ENCODE measurements at regions of chr14 and their contacts with region 1.

Region 1: GRCh38 chr14:96424109-96424989 is 32.4 kb downstream of the AK7 start:
- DNase-seq: no peak
- ATAC-seq: peak; percentile 67

Region 2: DNA sequence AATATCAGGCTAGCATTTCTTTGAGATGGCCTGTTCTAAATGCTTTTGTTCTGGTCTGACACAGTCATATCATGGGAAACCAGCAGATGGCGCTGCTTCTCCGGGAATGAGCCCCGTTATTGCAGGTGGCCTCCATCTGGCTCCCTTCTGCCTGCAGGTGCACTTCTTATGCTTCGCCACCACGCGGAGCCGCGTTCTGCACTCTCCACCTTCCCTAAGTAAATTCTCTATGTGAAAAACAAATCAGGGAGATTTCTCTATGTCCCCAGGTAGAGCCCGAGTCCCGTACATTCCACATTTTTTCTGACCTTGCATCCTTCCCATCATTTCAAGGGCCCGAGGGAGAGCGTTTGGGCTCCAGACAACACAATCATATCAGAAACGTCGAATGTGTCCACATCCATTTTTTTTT is 863.3 kb before region 1 on chr14:
- intact Hi-C with region 1: loop called (anchors 5 kb)
- DNase-seq: peak; percentile 81
- ATAC-seq: peak; percentile 76

Region 3: GRCh38 chr14:96100161-96101029 is 324.0 kb before region 1 on chr14:
- intact Hi-C with region 1: loop called (anchors 2 kb)
- DNase-seq: no peak
- ATAC-seq: no peak

Region 4: DNA sequence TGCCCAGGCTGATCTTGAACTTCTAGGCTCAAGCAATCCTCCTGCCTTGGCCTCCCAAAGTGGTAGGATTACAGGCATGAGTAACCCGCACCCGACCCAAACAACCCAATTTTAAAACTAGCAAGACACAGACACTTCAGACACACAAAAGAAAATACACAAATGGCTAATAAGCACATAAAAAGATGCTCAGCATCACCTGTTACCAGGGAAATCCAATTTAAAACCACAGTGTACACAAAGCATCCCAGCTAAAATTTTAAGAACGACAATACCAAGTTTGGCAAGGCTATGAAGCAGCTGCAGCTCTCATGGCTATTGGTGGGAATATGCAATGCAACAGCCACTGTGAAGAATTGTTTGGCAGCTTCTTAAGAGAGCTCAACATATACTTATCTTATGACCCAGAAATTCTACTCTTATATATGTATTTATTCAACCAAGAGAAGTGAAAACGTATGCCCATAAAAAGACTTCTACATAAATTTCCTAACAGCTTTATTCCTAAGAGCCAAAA is 126.3 kb before region 1 on chr14:
- intact Hi-C with region 1: loop called (anchors 1 kb)
- DNase-seq: no peak
- ATAC-seq: no peak

Region 5: DNA sequence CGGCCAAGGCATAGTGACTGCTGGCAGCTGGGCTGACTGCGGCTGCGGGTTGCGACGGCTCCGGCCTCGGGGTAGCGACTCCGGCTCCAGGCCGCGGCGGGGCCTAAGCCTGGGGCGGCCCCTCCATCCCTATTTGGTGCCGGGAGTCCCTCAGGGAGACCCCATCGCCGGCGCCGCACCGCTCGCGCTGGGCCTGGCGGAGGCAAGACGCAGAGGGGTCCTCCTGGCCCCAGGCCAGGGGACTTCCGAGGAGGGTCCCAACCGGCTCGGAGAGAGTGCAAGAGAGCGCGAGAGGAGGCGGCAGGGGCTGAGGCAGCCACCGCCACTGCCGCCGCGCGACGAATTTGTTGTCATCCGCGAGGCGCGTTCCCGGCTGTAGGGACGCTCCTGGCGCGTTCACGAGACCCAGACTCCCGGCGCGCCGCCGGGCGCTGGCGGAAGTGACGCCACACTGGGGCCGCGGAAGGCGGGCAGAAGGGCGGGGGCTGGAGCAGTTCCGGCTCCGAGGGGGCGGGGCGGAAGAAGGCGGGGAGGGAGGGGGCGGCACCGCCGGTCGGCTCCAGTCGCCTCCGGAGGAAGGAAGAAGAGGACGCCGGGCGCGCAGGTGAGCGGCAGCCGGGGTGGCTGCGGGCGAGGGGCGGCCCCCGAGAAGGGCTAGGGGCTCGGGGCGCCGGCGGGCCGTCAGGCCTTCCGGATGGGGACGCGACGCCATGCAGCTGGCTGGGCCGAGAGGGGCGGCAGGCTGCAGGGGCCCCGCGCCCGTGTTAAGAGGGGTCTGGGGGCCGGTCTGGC is 61.2 kb before region 1 on chr14 and contains the starts of genes ATG2B and GSKIP:
- intact Hi-C with region 1: loop called (anchors 5 kb)
- DNase-seq: peak; percentile 97
- ATAC-seq: peak; percentile 99
- total RNA-seq, gene ATG2B: 9.2 TPM
- total RNA-seq, gene GSKIP: 11.6 TPM